H1 (cell line): ENCODE measurements at regions of chr3 and their contacts with region 1.

Region 1: GRCh38 chr3:37967260-37967881 is 23.2 kb upstream of the VILL start:
- DNase-seq: peak; percentile 56 to 85
- H3K4me3 ChIP-seq: no peak overlapping the region
- H3K27ac ChIP-seq: no peak overlapping the region
- H3K4me1 ChIP-seq: peaks cover 0 to 7% (median 3%) of the 10 kb centered on the region in 4 experiments; a peak in 2 of 7 replicates
- H3K27me3 ChIP-seq: no peaks in the 10 kb centered on the region
- CTCF ChIP-seq: peak; percentile 91 to 98 (median 92)
- EP300 ChIP-seq: no peak
- POLR2A ChIP-seq: no peak
- RAD21 ChIP-seq: peak; percentile 84 to 90

Region 2: GRCh38 chr3:37872413-37873160 is 94.8 kb before region 1 on chr3:
- CTCF ChIA-PET with region 1: interaction called, 27 read pairs
- POLR2A ChIA-PET with region 1: no interaction called
- DNase-seq: no peak
- H3K4me3 ChIP-seq: no peak overlapping the region
- H3K27ac ChIP-seq: no peak overlapping the region
- H3K4me1 ChIP-seq: peaks cover 0 to 5% (median 4%) of the 10 kb centered on the region in 4 experiments; a peak in 3 of 7 replicates
- H3K27me3 ChIP-seq: no peaks in the 10 kb centered on the region
- CTCF ChIP-seq: no peak
- EP300 ChIP-seq: no peak
- POLR2A ChIP-seq: no peak
- RAD21 ChIP-seq: no peak

Region 3: GRCh38 chr3:37892927-37893600 is 74.3 kb before region 1 on chr3:
- CTCF ChIA-PET with region 1: interaction called, 12 read pairs
- POLR2A ChIA-PET with region 1: no interaction called
- DNase-seq: no peak
- H3K4me3 ChIP-seq: no peak overlapping the region
- H3K27ac ChIP-seq: no peak overlapping the region
- H3K4me1 ChIP-seq: peaks cover 0 to 6% (median 3%) of the 10 kb centered on the region in 4 experiments; a peak in 4 of 7 replicates
- H3K27me3 ChIP-seq: no peaks in the 10 kb centered on the region
- CTCF ChIP-seq: no peak
- EP300 ChIP-seq: no peak
- POLR2A ChIP-seq: no peak
- RAD21 ChIP-seq: no peak

Region 4: GRCh38 chr3:37916685-37917084 is 50.7 kb before region 1 on chr3:
- CTCF ChIA-PET with region 1: interaction called, 20 read pairs
- POLR2A ChIA-PET with region 1: no interaction called
- DNase-seq: no peak
- H3K4me3 ChIP-seq: no peak overlapping the region
- H3K27ac ChIP-seq: no peak overlapping the region
- H3K4me1 ChIP-seq: no peaks in the 10 kb centered on the region; a peak in 1 of 7 replicates
- H3K27me3 ChIP-seq: no peaks in the 10 kb centered on the region
- CTCF ChIP-seq: no peak
- EP300 ChIP-seq: no peak
- POLR2A ChIP-seq: no peak
- RAD21 ChIP-seq: no peak

Region 5: GRCh38 chr3:37945807-37946530 is 21.4 kb before region 1 on chr3:
- CTCF ChIA-PET with region 1: interaction called, 24 read pairs
- POLR2A ChIA-PET with region 1: no interaction called
- DNase-seq: peak in 1 of 2 experiments; percentile 42
- H3K4me3 ChIP-seq: no peak overlapping the region
- H3K27ac ChIP-seq: no peak overlapping the region
- H3K4me1 ChIP-seq: peaks cover 0 to 6% (median 2%) of the 10 kb centered on the region in 4 experiments; a peak in 3 of 7 replicates
- H3K27me3 ChIP-seq: no peaks in the 10 kb centered on the region
- CTCF ChIP-seq: no peak
- EP300 ChIP-seq: no peak
- POLR2A ChIP-seq: no peak
- RAD21 ChIP-seq: no peak

Region 6: GRCh38 chr3:37979541-37980461 is 12.4 kb after region 1 on chr3:
- CTCF ChIA-PET with region 1: interaction called, 134 read pairs
- POLR2A ChIA-PET with region 1: interaction called, 7 read pairs
- DNase-seq: no peak
- H3K4me3 ChIP-seq: no peak overlapping the region
- H3K27ac ChIP-seq: no peak overlapping the region
- H3K4me1 ChIP-seq: no peaks in the 10 kb centered on the region
- H3K27me3 ChIP-seq: no peaks in the 10 kb centered on the region
- CTCF ChIP-seq: no peak
- EP300 ChIP-seq: no peak
- POLR2A ChIP-seq: no peak
- RAD21 ChIP-seq: no peak

Region 7: GRCh38 chr3:38049358-38050126 is 82.2 kb after region 1 on chr3:
- CTCF ChIA-PET with region 1: no interaction called
- POLR2A ChIA-PET with region 1: no interaction called
- DNase-seq: no peak
- H3K4me3 ChIP-seq: no peak overlapping the region
- H3K27ac ChIP-seq: no peak overlapping the region
- H3K4me1 ChIP-seq: no peaks in the 10 kb centered on the region
- H3K27me3 ChIP-seq: no peaks in the 10 kb centered on the region; a peak in 1 of 7 replicates
- CTCF ChIP-seq: no peak
- EP300 ChIP-seq: no peak
- POLR2A ChIP-seq: no peak
- RAD21 ChIP-seq: no peak

Region 8: GRCh38 chr3:38227989-38228388 is 260.6 kb after region 1 on chr3:
- CTCF ChIA-PET with region 1: no interaction called
- POLR2A ChIA-PET with region 1: no interaction called
- DNase-seq: no peak
- H3K4me3 ChIP-seq: no peak overlapping the region
- H3K27ac ChIP-seq: no peak overlapping the region
- H3K4me1 ChIP-seq: no peaks in the 10 kb centered on the region
- H3K27me3 ChIP-seq: no peaks in the 10 kb centered on the region
- CTCF ChIP-seq: no peak
- EP300 ChIP-seq: no peak
- POLR2A ChIP-seq: no peak
- RAD21 ChIP-seq: no peak